OCI-LY7 (cell line): ENCODE measurements at regions of chr17 and their contacts with region 1.

Region 1: DNA sequence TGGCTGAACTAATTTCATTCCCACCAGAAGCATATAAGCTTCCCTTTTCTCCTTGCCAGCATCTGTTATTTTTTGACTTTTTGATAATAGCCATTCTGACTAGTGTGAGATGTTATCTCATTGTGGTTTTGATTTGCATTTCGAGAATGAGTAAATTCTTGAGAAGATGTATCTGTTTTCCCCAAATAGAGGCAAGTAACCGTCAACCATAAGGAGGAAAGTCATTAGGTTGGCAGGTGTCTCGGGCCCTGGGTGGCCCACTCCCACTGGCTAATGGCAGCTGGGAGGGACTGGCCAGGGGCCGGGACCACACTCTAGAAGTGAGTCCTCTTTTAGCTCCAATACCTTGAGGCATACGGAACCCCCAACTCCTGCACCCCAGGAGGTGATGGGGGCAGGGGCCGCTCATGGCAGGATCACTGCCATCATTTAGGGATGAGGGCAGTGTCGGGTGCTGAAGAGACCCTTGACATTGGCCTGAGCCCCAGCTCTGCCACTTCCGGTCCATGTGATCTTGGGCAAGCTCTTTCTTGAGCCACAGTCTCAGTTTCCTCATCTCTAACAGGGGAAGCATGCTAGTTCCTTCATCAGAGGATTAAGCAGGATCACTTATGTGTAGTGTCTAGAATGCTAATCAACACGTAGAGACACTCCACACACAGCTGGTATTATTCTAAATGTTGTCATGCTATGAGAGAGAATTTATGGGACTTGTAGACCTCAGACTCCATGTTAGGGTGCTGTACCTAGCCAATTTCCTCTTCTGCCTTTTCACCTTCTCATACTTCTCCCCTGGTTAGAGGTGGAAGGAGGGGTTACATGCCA is 44.3 kb downstream of the RGS9 start:
- DNase-seq: peak; percentile 74
- H3K4me3 ChIP-seq: peak overlapping the region; percentile 42
- H3K27ac ChIP-seq: peak overlapping the region; percentile 96
- H3K4me1 ChIP-seq: peaks cover 88% of the 10 kb centered on the region
- CTCF ChIP-seq: no peak

Region 2: GRCh38 chr17:64968652-64969501 is 212.6 kb before region 1 on chr17:
- CTCF ChIA-PET with region 1: no interaction called
- POLR2A ChIA-PET with region 1: interaction called, 4 read pairs
- intact Hi-C with region 1: loop called (anchors 5 kb)
- DNase-seq: no peak
- H3K4me3 ChIP-seq: peak overlapping the region; percentile 18
- H3K27ac ChIP-seq: peak overlapping the region; percentile 99
- H3K4me1 ChIP-seq: peaks cover 98% of the 10 kb centered on the region
- CTCF ChIP-seq: no peak

Region 3: GRCh38 chr17:65122836-65123756 is 58.4 kb before region 1 on chr17:
- CTCF ChIA-PET with region 1: no interaction called
- POLR2A ChIA-PET with region 1: interaction called, 3 read pairs
- intact Hi-C with region 1: loop called (anchors 5 kb)
- DNase-seq: peak; percentile 94
- H3K4me3 ChIP-seq: peak overlapping the region; percentile 71
- H3K27ac ChIP-seq: peak overlapping the region; percentile 57
- H3K4me1 ChIP-seq: peaks cover 36% of the 10 kb centered on the region
- CTCF ChIP-seq: no peak

Region 4: DNA sequence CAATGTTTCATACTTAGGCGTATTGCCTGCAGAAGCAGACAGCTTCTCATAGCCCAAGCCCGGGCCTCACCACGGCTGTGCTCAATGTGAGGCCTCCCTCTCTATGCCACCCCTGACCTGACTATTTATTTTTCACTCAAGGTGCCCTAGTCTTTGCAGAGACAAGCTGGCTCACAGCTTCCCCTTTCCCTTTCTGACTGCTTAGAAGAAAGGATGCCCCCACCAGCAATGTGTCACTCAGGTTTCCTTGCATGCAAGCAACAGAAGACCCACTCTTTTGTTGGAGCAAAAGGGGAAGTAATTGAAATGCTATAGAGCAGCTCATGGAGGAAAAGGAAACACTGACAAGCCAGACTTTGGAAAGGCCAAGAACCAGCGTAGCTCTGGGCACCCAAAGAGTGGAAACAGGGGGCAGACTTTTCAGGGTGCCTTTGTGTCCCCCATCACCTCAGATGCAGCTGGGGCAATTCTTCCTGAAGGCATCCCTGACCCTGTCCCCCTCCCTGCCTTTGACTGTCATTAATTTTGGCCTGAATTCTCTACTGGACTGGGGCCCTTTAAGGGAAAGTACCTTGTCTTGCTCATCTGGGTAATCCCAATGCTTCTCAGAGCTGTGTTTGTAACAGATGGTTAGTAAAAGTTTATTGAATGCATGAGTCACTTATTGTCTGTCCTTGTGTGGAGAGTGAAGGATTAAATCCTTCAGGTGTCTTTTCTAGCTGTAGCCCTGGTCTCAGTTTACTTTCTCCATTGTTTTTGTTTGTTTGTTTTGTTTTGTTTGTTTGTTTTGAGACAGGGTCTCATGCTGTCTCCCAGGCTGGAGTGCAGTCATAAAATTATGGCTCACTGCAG is 26.5 kb before region 1 on chr17:
- CTCF ChIA-PET with region 1: interaction called, 3 read pairs
- POLR2A ChIA-PET with region 1: interaction called, 15 read pairs
- intact Hi-C with region 1: no loop called
- DNase-seq: peak; percentile 84
- H3K4me3 ChIP-seq: peak overlapping the region; percentile 39
- H3K27ac ChIP-seq: peak overlapping the region; percentile 72
- H3K4me1 ChIP-seq: peaks cover 27% of the 10 kb centered on the region
- CTCF ChIP-seq: no peak; the same call in 1 of the 2 replicates

Region 5: GRCh38 chr17:65231662-65232335 is 50.4 kb after region 1 on chr17:
- CTCF ChIA-PET with region 1: no interaction called
- POLR2A ChIA-PET with region 1: no interaction called
- intact Hi-C with region 1: no loop called
- DNase-seq: peak; percentile 71
- H3K4me3 ChIP-seq: no peak overlapping the region
- H3K27ac ChIP-seq: no peak overlapping the region
- H3K4me1 ChIP-seq: no peaks in the 10 kb centered on the region
- CTCF ChIP-seq: peak; percentile 85